ENCODE measurements at regions of chr12 and their contacts with region 1.

Region 1: GRCh38 chr12:79597910-79598309 is 92.9 kb downstream of the PAWR start:
- DNase-seq: no peak
- H3K4me3 ChIP-seq: no peak overlapping the region
- H3K27ac ChIP-seq: peak overlapping the region; percentile 22; the same call in 1 of the 2 replicates
- H3K4me1 ChIP-seq: no peaks in the 10 kb centered on the region
- H3K27me3 ChIP-seq: no peaks in the 10 kb centered on the region
- CTCF ChIP-seq: no peak

Region 2: GRCh38 chr12:79573820-79574219 is 24.1 kb before region 1 on chr12:
- CTCF ChIA-PET with region 1: interaction called, 14 read pairs
- POLR2A ChIA-PET with region 1: no interaction called
- intact Hi-C with region 1: no loop called
- DNase-seq: no peak
- H3K4me3 ChIP-seq: no peak overlapping the region
- H3K27ac ChIP-seq: no peak overlapping the region
- H3K4me1 ChIP-seq: no peaks in the 10 kb centered on the region
- H3K27me3 ChIP-seq: no peaks in the 10 kb centered on the region
- CTCF ChIP-seq: no peak

Region 3: DNA sequence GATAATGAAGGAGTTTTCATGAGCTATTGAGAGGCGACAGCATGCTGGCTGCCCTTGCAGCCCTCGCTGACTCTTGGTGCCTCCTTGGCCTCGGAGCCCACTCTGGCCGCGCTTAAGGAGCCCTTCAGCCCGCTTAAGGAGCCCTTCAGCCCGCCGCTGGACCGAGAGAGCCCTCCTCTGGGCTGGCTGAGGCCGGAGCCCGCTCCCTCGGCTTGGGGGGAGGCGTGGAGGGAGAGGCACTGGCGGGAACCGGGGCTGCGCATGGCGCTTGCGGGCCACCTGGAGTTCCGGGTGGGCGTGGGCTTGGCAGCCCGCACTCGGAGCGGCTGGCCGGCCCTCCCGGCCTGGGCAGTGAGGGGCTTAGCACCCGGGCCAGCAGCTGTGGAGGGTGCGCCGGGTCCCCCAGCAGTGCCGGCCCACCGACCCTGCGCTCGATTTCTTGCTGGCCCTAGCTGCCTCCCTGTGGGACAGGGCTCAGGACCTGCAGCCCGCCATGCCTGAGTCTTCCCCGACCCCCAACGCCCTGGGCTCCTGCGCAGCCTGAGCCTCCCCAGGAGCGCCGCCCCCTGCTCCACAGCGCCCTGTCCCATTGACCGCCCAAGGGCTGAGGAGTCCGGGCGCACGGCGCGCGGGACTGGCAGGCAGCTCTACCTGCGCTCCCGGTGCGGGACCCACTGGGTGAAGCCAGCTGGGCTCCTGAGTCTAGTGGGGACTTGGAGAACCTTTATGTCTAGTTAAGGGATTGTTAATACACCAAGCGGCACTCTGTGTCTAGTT is 113.0 kb after region 1 on chr12:
- CTCF ChIA-PET with region 1: interaction called, 19 read pairs
- POLR2A ChIA-PET with region 1: no interaction called
- intact Hi-C with region 1: no loop called
- DNase-seq: peak in 1 of 2 experiments; percentile 33
- H3K4me3 ChIP-seq: peak overlapping the region; percentile 18; the same call in 1 of the 2 replicates
- H3K27ac ChIP-seq: no peak overlapping the region
- H3K4me1 ChIP-seq: peaks cover 7% of the 10 kb centered on the region; the same call in 1 of the 2 replicates
- H3K27me3 ChIP-seq: no peaks in the 10 kb centered on the region
- CTCF ChIP-seq: no peak